CD8-positive, alpha-beta T cell (primary cell): ENCODE measurements at regions of chr5 and their contacts with region 1.

Region 1: GRCh38 chr5:100430268-100431195 is 104.6 kb upstream of the FAM174A start:
- DNase-seq: peak; percentile 2 to 58 (median 36)
- ATAC-seq: peak; percentile 46
- H3K4me3 ChIP-seq: no peak overlapping the region
- H3K4me3 Mint-ChIP-seq: no peak overlapping the region
- H3K27ac ChIP-seq: no peak overlapping the region
- H3K27ac Mint-ChIP-seq: no peak overlapping the region
- H3K4me1 ChIP-seq: no peaks in the 10 kb centered on the region
- H3K4me1 Mint-ChIP-seq: no peaks in the 10 kb centered on the region
- H3K27me3 ChIP-seq: no peaks in the 10 kb centered on the region
- H3K27me3 Mint-ChIP-seq: no peaks in the 10 kb centered on the region
- CTCF ChIP-seq: peak; percentile 84

Region 2: DNA sequence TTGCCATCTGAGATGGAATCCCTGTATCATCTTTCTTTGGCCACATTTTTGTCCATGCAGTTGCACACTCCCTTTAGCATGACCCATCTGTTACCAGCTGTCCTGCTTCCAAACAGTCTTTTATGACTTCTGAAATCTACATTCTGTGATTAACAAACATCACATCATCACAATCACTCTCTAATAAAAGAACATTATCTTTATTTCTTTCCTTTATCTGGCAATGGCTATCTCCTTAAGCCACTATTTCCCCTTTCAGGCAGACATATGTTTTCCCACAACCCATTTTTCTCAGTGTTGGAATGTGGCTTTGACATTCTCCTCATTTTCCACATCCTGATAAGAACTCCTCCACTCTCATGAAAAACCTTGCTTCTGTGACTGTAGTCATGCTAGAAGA is 331.6 kb after region 1 on chr5:
- CTCF ChIA-PET with region 1: no interaction called
- POLR2A ChIA-PET with region 1: no interaction called
- intact Hi-C with region 1: no loop called
- DNase-seq: no peak
- ATAC-seq: no peak
- H3K4me3 ChIP-seq: no peak overlapping the region
- H3K4me3 Mint-ChIP-seq: no peak overlapping the region
- H3K27ac ChIP-seq: no peak overlapping the region
- H3K27ac Mint-ChIP-seq: no peak overlapping the region
- H3K4me1 ChIP-seq: no peaks in the 10 kb centered on the region
- H3K4me1 Mint-ChIP-seq: no peaks in the 10 kb centered on the region
- H3K27me3 ChIP-seq: no peaks in the 10 kb centered on the region
- H3K27me3 Mint-ChIP-seq: no peaks in the 10 kb centered on the region
- CTCF ChIP-seq: no peak

Region 3: DNA sequence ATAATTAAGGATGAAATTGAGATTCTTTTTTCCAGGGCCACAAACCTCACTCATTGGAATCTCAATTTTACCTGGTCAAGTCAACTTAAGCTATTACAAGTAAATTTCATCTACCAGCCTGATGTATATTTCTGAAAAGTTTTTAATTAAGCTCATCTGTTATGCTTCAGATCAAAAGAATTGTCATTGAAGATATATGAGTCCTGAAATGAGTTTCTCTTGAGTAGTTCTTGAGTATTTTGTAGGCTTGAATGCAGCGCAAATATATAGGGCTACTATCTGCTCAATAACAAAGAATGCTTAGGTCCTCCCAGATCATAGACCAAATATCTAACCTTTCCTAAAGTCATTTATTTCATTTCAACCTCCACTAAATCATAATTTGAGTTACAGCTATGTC is 954.7 kb after region 1 on chr5:
- CTCF ChIA-PET with region 1: no interaction called
- POLR2A ChIA-PET with region 1: no interaction called
- intact Hi-C with region 1: loop called in 1 of 2 experiments (anchors 10 kb)
- DNase-seq: no peak
- ATAC-seq: no peak
- H3K4me3 ChIP-seq: no peak overlapping the region
- H3K4me3 Mint-ChIP-seq: no peak overlapping the region
- H3K27ac ChIP-seq: no peak overlapping the region
- H3K27ac Mint-ChIP-seq: no peak overlapping the region
- H3K4me1 ChIP-seq: no peaks in the 10 kb centered on the region
- H3K4me1 Mint-ChIP-seq: no peaks in the 10 kb centered on the region
- H3K27me3 ChIP-seq: no peaks in the 10 kb centered on the region
- H3K27me3 Mint-ChIP-seq: no peaks in the 10 kb centered on the region
- CTCF ChIP-seq: no peak

Region 4: DNA sequence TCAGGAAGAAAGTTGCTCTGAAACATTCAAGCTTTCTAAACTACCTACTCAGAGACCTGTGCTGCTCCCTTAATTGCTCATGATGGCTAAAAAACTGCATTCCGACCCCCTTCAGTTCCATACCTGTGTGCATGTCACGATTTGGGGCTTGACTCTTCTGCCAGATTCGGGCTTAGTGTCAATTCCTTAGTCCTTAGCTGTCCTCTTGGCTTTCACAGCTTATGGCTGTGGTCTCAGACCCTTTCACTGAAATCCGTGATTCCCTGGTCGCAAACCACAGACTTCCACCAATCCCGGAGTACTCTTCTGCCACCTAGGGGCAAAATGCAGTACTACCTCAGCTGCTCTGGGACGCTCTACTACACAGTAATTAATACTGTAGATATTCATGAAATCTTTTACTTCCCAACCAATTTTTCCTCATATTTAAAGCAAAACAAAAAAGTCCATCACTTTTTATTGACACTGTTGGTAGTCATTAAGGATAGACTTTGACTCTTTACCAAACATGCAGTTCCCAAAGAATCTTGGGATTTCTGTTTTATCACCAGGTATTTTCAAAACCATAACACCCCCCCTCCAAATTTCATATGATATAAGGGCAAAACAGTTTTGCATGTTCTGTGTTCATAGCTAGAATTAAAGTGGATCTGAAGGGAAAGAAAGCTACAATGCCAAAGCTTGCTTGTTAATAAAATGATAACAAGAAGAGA is 1248.1 kb after region 1 on chr5:
- CTCF ChIA-PET with region 1: no interaction called
- POLR2A ChIA-PET with region 1: no interaction called
- intact Hi-C with region 1: loop called in 1 of 2 experiments (anchors 2 kb)
- DNase-seq: peak in 5 of 9 experiments; percentile 1 to 29 (median 16)
- ATAC-seq: no peak
- H3K4me3 ChIP-seq: no peak overlapping the region
- H3K4me3 Mint-ChIP-seq: no peak overlapping the region
- H3K27ac ChIP-seq: no peak overlapping the region
- H3K27ac Mint-ChIP-seq: no peak overlapping the region
- H3K4me1 ChIP-seq: no peaks in the 10 kb centered on the region
- H3K4me1 Mint-ChIP-seq: no peaks in the 10 kb centered on the region
- H3K27me3 ChIP-seq: no peaks in the 10 kb centered on the region
- H3K27me3 Mint-ChIP-seq: no peaks in the 10 kb centered on the region
- CTCF ChIP-seq: peak; percentile 69

Region 5: DNA sequence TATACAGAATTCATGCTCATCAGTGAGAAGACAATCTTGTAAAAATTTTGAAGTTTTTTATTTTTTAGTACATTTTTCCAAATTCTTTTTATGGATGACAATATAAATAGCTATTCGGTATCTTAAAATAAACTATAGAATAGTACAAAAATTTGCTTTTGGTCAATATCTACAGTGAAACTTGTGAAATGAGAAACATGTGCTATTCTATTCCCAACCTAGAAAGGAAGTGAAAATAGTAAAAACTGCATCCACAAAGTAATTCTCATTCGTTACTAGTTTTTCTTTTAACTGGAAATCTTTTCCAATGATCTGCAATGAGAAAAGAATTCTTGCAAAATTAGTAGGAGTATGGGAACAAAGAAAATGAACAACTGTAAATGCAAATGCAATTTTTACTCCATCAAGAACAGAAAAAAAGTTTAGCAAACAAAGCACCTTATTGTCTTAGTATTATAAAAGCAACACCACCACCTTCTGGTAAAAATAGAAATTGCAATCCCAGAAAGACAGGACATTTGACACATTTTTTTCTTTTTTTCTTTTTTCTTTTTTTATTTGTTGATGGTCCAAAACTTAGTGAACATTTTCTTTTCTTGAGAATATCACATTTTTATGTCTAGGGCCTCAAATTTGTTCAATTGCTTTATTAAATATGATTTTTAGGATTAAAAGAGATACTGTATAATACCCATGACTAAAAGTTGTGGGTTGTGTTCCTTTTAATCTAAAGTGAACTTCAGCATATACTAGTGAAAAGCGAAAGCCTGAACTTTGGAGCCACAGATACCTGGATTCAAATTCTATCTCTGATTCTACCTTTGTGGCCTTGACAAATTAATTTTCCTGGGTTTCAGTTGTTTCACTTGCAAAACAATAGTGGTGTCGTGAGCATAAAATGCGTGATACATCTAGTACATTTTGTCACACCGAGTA is 1793.3 kb after region 1 on chr5:
- CTCF ChIA-PET with region 1: no interaction called
- POLR2A ChIA-PET with region 1: no interaction called
- intact Hi-C with region 1: loop called (anchors 2 to 5 kb)
- DNase-seq: peak in 2 of 9 experiments; percentile 48 to 57
- ATAC-seq: no peak
- H3K4me3 ChIP-seq: no peak overlapping the region
- H3K4me3 Mint-ChIP-seq: no peak overlapping the region
- H3K27ac ChIP-seq: no peak overlapping the region
- H3K27ac Mint-ChIP-seq: no peak overlapping the region
- H3K4me1 ChIP-seq: no peaks in the 10 kb centered on the region
- H3K4me1 Mint-ChIP-seq: no peaks in the 10 kb centered on the region
- H3K27me3 ChIP-seq: no peaks in the 10 kb centered on the region
- H3K27me3 Mint-ChIP-seq: peaks cover 2% of the 10 kb centered on the region
- CTCF ChIP-seq: peak; percentile 86